ENCODE measurements at regions of chr3 and their contacts with region 1.

Region 1: DNA sequence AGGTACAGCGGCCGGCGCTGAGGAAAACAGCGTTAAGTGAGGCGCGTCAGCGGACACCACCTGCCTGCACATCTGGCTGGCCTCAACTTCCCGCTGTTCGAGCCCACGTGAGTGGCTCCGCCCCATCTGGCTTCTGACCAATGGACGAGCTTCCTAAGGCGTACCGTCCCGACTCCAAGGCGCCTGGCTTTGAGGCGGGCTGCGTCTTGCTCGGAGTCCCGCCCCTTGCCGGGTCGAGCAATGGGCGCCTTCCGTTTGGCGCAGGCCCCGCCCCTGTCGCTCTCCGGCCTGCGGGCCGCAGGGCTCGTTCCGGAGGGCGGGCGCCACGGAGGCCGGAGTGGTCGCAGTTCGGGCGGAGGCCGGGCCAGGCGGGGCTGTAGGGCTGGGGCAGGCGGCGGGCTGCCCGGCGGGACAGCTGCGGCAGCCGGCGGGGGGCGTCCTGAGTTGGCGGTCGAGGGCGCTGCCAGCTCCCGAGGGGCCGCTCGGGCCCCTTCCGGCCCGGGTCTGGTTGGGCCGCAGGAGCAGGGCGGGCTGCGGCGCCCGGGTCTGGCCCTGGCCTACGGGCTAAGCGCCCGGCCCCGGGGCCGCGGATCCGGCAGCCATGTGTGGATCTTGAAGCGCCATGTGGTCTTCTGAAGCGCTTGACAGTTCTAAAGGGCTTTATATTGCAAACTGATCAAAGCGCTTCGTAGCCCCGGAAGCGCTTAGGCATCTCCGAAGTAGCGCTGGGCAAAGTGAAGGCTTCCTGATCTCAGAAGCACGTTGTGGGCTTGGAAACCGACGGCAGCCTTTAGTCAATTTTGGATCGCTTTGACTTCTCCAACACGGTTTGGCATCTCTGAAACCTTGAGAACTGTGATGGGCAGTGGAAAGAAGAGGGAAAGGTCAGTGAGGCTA is at the start of gene TATDN2:
- DNase-seq: peak; percentile 98
- H3K4me3 Mint-ChIP-seq: peak within 1 kb of the TSS; percentile 89
- H3K27ac Mint-ChIP-seq: peak within 1 kb of the TSS; percentile 92
- H3K4me1 Mint-ChIP-seq: peaks cover 55% of the 10 kb centered on the region
- H3K27me3 Mint-ChIP-seq: no peaks in the 10 kb centered on the region
- total RNA-seq, gene TATDN2: 25.8 to 28.1 TPM

Region 2: DNA sequence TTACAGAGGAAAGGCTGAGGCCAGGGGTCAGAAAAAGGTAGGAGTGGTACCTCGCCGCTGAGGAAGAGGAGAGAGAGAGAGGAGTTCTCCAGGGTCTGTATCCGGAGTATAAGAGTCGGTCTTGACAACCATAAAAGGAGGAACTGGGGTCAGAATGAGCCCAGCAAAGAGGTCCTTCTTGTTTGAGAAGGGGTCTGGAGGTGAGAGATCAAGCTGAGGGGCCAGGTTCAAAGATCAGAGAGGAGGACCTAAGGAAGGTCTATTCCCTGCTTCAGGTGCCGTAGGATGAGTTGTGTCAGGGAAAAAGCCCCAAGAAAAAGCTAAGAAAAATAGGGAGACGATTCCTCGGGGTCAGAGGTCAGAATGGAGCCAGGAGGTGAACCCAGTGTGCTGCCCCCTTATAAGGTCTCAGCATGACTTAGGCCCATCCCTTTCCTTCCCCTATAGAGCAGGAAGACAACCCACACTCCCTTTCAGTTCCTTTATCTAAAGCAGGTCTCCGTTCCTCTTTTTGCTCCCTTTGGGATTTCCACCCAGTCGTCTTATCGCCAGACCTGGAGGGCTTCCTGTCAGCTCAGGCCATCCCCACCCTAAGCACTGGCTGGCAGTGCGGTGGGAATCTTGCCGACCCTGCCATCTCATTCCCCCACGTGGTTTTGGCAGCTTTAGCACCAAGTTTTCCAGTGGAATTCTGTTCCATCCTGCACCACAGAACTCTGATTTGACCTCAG is 598.5 kb before region 1 on chr3:
- CTCF ChIA-PET with region 1: no interaction called
- intact Hi-C with region 1: loop called (anchors 1 kb)
- DNase-seq: no peak
- H3K4me3 Mint-ChIP-seq: peak overlapping the region; percentile 94
- H3K27ac Mint-ChIP-seq: peak overlapping the region; percentile 86
- H3K4me1 Mint-ChIP-seq: peaks cover 32% of the 10 kb centered on the region
- H3K27me3 Mint-ChIP-seq: no peaks in the 10 kb centered on the region

Region 3: DNA sequence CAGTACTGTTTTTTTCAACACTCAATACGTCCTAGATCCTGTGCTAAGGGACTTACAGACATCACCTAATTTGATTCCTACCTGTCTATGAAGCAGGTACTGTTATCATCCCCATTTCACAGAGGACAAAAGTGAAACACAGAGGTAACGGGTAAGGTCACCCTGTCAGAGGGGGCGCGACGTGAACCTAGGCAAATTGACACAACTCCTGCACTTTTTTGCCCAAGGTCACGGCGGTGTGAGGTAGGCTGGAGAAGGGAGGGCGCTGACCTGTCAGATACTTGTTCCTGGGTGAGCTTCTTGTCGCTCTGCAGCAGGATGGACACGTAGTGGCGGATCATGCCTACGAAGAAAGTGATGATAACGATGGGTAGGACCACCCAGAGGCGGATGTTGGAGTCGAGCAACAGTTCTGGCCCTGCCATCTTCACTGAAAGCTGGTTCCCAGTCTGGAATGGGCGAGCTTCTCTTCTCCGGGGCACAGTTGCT is 262.2 kb before region 1 on chr3:
- CTCF ChIA-PET with region 1: no interaction called
- intact Hi-C with region 1: loop called (anchors 1 kb)
- DNase-seq: no peak
- H3K4me3 Mint-ChIP-seq: peak overlapping the region; percentile 97
- H3K27ac Mint-ChIP-seq: peak overlapping the region; percentile 99
- H3K4me1 Mint-ChIP-seq: peaks cover 39% of the 10 kb centered on the region
- H3K27me3 Mint-ChIP-seq: no peaks in the 10 kb centered on the region

Region 4: DNA sequence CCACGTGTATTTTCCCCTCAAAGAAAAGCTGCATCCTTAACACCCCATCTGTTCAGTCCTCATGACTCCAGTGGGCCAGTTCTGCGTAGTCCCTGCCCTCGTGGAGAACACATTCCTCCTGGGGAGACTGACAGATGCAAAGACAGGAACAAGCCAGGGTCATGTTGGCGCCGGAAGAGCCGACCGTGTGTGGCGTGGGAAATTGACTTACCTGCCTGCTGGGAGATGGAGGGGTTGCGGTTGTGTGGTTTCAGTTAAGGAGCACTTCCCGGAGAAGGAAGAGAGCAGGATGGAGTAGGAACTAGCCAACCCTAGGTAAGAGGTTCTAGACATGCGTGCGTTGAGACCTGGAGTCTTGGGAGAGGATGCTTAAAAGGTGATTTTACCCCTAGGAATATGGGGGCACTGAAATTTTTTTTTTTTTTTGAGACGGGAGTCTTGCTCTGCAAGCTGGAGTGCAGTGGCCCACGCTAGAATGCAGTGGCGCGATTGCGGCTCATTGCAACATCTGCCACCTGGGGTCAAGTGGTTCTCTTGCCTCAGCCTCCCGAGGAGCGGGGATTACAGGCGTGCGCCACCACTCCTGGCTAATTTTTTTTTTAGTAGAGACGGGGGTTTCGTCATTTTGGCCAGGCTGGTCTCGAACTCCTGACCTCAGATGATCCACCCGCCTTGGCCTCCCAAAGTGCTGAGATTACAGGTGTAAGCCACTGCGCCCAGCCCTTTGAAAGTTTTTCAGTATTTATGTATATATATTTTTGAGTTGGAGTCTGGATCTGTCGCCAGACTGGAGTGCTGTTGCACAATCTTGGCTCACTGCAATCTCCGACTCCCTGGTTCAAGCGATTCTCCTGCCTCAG is 105.5 kb before region 1 on chr3:
- CTCF ChIA-PET with region 1: no interaction called
- intact Hi-C with region 1: loop called (anchors 1 kb)
- DNase-seq: peak; percentile 48
- H3K4me3 Mint-ChIP-seq: peak overlapping the region; percentile 84
- H3K27ac Mint-ChIP-seq: peak overlapping the region; percentile 87
- H3K4me1 Mint-ChIP-seq: peaks cover 32% of the 10 kb centered on the region
- H3K27me3 Mint-ChIP-seq: no peaks in the 10 kb centered on the region

Region 5: GRCh38 chr3:10224784-10225665 is 23.4 kb before region 1 on chr3:
- CTCF ChIA-PET with region 1: no interaction called
- intact Hi-C with region 1: loop called (anchors 1 kb)
- DNase-seq: peak; percentile 88
- H3K4me3 Mint-ChIP-seq: no peak overlapping the region
- H3K27ac Mint-ChIP-seq: peak overlapping the region; percentile 79
- H3K4me1 Mint-ChIP-seq: peaks cover 58% of the 10 kb centered on the region
- H3K27me3 Mint-ChIP-seq: no peaks in the 10 kb centered on the region

Region 6: DNA sequence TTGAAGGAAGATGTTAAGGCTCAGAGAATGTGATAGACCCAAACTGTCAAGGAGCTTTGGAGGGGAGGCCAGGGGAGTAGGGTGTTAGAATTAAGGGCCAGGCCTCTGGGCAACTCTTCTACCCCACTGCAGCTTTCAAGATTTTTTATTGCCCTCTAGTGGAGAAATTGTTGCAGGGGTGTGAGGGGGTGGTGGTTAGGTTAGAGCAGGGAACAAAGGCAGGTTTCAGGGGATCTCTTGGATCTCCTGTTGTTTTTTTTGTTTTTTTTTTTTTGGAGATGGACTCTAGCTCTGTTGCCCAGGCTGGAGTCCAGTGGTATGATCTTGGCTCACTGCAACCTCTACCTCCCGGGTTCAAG is 73.9 kb after region 1 on chr3:
- CTCF ChIA-PET with region 1: no interaction called
- intact Hi-C with region 1: loop called (anchors 2 kb)
- DNase-seq: peak; percentile 29
- H3K4me3 Mint-ChIP-seq: no peak overlapping the region
- H3K27ac Mint-ChIP-seq: no peak overlapping the region
- H3K4me1 Mint-ChIP-seq: peaks cover 23% of the 10 kb centered on the region
- H3K27me3 Mint-ChIP-seq: peaks cover 1% of the 10 kb centered on the region